Pancreas (tissue), 10 donors: ENCODE measurements at regions of chr14 and their contacts with region 1.

Region 1: GRCh38 chr14:58501214-58501816 is 73.8 kb downstream of the KIAA0586 start:
- DNase-seq: no peak
- ATAC-seq: peak in 3 of 4 donors; percentile 81 to 86 (median 82)
- H3K4me3 ChIP-seq: no peak overlapping the region
- H3K27ac ChIP-seq: no peak overlapping the region
- H3K4me1 ChIP-seq: no peaks in the 10 kb centered on the region
- H3K27me3 ChIP-seq: no peaks in the 10 kb centered on the region
- CTCF ChIP-seq: peak in 3 of 4 donors; percentile 54 to 77 (median 55)

Region 2: DNA sequence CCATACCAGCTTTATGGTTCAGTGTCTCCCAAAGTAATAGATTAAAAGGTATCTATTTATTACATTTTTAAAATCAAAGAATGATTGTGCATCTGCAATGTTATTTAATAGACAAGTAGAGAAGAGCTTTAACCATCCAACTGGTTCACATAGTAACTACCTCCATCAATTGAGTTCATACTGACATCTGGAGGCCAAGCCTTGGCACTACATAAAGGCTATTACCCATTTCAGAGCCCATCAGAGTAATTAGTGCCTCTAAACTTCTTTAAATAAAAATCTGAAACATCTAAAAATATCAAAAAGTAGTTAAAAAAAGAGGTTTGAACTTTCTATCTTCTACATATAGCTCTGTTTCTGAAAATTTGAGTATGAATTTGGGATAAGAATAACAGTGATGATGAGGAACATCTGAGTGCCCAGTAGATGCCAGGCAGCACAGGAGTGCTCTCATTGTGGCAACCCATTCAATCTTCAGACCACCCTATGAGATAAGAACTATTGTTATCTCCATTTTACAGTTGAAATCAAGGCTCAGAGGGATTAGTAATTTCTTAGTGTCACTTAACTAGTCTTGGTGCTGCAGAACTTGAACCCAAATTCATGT is 554.2 kb after region 1 on chr14:
- intact Hi-C with region 1: loop called in 2 of 3 experiments (anchors 10 kb)
- DNase-seq: peak in 2 of 6 donors; percentile 4 to 29
- ATAC-seq: peak in 3 of 4 donors; percentile 79 to 90 (median 86)
- H3K4me3 ChIP-seq: no peak overlapping the region
- H3K27ac ChIP-seq: no peak overlapping the region
- H3K4me1 ChIP-seq: no peaks in the 10 kb centered on the region
- H3K27me3 ChIP-seq: no peaks in the 10 kb centered on the region
- CTCF ChIP-seq: peak in 3 of 4 donors; percentile 49 to 61 (median 60)